Naive thymus-derived CD8-positive, alpha-beta T cell (primary cell): ENCODE measurements at regions of chr22 and their contacts with region 1.

Region 1: GRCh38 chr22:46762238-46763050 is at the start of gene TBC1D22A:
- DNase-seq: peak; percentile 90 to 96 (median 94)
- ATAC-seq: peak; percentile 87 to 94
- H3K4me3 Mint-ChIP-seq: peak within 1 kb of the TSS; percentile 95 to 100 (median 98)
- H3K27ac Mint-ChIP-seq: peak within 1 kb of the TSS; percentile 98 to 100 (median 100)
- H3K4me1 Mint-ChIP-seq: peaks cover 39 to 71% (median 66%) of the 10 kb centered on the region in 4 donors
- H3K27me3 Mint-ChIP-seq: no peaks in the 10 kb centered on the region
- polyA plus RNA-seq, gene TBC1D22A: 23.0 to 24.6 (median 23.3) TPM

Region 2: GRCh38 chr22:46737976-46738646 is 24.3 kb before region 1 on chr22 and contains the start of gene CERK:
- POLR2A ChIA-PET with region 1: interaction called, 78 read pairs
- DNase-seq: peak; percentile 39 to 80 (median 58)
- ATAC-seq: peak; percentile 45 to 65
- H3K4me3 Mint-ChIP-seq: peak within 1 kb of the TSS; percentile 91 to 100 (median 100)
- H3K27ac Mint-ChIP-seq: peak within 1 kb of the TSS; percentile 95 to 100 (median 99)
- H3K4me1 Mint-ChIP-seq: peaks cover 25 to 48% (median 48%) of the 10 kb centered on the region in 4 donors
- H3K27me3 Mint-ChIP-seq: no peaks in the 10 kb centered on the region
- polyA plus RNA-seq, gene CERK: 39.4 to 61.2 (median 41.6) TPM

Region 3: GRCh38 chr22:46774253-46774979 is 12.0 kb after region 1 on chr22:
- POLR2A ChIA-PET with region 1: interaction called, 42 read pairs
- DNase-seq: no peak
- ATAC-seq: peak; percentile 24 to 33
- H3K4me3 Mint-ChIP-seq: peak overlapping the region; percentile 33 to 83 (median 72)
- H3K27ac Mint-ChIP-seq: peak overlapping the region; percentile 79 to 95 (median 90)
- H3K4me1 Mint-ChIP-seq: peaks cover 47 to 90% (median 79%) of the 10 kb centered on the region in 4 donors
- H3K27me3 Mint-ChIP-seq: no peaks in the 10 kb centered on the region

Region 4: GRCh38 chr22:46791201-46791731 is 28.8 kb after region 1 on chr22:
- POLR2A ChIA-PET with region 1: interaction called, 81 read pairs
- DNase-seq: peak; percentile 51 to 89 (median 80)
- ATAC-seq: peak; percentile 96 to 98
- H3K4me3 Mint-ChIP-seq: peak overlapping the region; percentile 69 to 89 (median 84)
- H3K27ac Mint-ChIP-seq: peak overlapping the region; percentile 99 to 100 (median 100)
- H3K4me1 Mint-ChIP-seq: peaks cover 14 to 62% (median 38%) of the 10 kb centered on the region in 4 donors
- H3K27me3 Mint-ChIP-seq: no peaks in the 10 kb centered on the region